Sigmoid colon (tissue), 7 donors: ENCODE measurements at regions of chr19 and their contacts with region 1.

Region 1: DNA sequence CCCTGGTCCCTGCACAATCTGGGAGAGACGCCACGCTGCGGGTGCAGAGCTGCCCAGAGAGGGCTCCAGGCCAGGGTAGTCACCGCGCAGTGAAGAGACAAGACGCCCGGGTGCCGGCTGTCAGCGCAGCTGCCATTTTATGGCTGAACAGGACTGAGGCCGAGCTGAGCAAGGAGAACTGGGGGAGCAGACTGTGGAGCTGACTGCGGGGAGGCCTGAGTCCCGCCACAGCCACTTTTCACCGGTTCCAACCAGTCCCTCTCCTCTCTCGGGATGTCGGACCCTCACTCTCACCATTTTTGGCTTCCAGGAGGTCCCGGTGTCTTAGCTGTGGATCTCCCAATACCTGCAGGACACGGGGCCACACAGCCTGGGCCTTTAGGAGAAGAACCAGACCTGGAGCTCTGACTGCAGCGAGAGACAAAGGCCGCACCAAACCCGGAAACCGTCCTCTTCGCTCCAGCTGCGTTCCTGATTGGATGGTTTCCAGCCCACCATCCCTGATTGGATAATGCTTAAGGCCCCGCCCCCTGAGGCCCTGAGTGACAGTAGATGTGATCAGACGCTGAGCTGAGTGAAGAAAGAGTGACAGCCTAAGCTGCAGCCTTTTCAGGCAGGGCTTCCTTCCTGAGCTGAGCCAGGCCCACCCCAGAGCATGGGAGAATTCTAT is at the start of gene ZNF626:
- DNase-seq: peak; percentile 98
- H3K4me3 ChIP-seq: peak within 1 kb of the TSS; percentile 66 to 79 (median 70)
- H3K27ac ChIP-seq: peak within 1 kb of the TSS; percentile 86 to 94 (median 89)
- H3K4me1 ChIP-seq: peaks cover 0 to 43% (median 36%) of the 10 kb centered on the region in 4 donors
- H3K27me3 ChIP-seq: no peaks in the 10 kb centered on the region
- CTCF ChIP-seq: no peak
- EP300 ChIP-seq: no peak
- POLR2A ChIP-seq: peak; percentile 65 to 74
- total RNA-seq, gene ZNF626: 14.3 to 20.1 (median 18.9) TPM

Region 2: GRCh38 chr19:20315543-20315942 is 345.7 kb before region 1 on chr19:
- intact Hi-C with region 1: no loop called
- DNase-seq: no peak
- H3K4me3 ChIP-seq: no peak overlapping the region
- H3K27ac ChIP-seq: no peak overlapping the region
- H3K4me1 ChIP-seq: no peaks in the 10 kb centered on the region
- H3K27me3 ChIP-seq: no peaks in the 10 kb centered on the region
- CTCF ChIP-seq: no peak
- EP300 ChIP-seq: no peak
- POLR2A ChIP-seq: no peak

Region 3: DNA sequence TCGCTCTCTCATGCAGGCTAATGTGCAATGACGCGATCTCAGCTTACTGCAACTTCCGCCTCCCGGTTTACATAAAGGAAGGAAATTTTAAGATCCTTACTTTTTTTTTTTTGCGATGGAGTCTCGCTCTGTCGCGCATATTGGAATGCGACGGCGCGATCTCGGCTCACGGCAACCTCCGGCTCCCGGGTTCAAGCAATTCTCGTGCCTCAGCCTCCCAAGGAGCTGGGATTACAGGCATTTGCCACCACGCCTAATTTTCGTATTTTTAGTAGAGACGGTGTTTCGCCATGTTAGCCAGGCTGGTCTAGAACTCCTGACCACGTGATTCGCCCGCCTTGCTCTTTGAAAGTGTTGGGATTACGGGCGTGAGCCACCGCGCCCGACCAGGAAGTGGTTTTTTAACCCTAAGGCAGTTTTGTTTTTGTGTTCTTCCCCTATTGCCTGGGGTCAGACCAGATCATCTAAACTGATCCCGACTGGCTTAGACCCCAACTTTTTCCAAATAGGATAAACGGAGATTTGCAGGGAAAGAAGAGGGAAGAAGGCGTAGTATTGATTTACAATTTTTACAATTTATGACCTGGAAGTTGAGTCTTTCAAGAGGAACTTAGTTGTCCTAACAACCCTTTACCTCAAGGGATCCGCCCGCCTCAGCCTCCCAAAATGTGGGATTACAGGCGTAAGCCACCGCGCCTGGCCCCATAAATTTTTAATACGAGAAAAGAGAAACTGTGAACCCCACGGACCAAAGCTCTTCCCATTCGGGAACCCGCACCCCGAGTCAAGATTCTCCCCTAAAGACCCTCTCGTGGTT is 237.7 kb before region 1 on chr19:
- intact Hi-C with region 1: loop called (anchors 5 kb)
- DNase-seq: peak; percentile 83
- H3K4me3 ChIP-seq: peak overlapping the region; percentile 57 to 69 (median 63)
- H3K27ac ChIP-seq: peak overlapping the region; percentile 84 to 90 (median 88)
- H3K4me1 ChIP-seq: peaks cover 0 to 13% (median 2%) of the 10 kb centered on the region in 4 donors
- H3K27me3 ChIP-seq: no peaks in the 10 kb centered on the region
- CTCF ChIP-seq: no peak
- EP300 ChIP-seq: no peak
- POLR2A ChIP-seq: no peak

Region 4: GRCh38 chr19:20565321-20566018 is 95.8 kb before region 1 on chr19 and contains the start of gene ZNF737:
- intact Hi-C with region 1: loop called (anchors 2 kb)
- DNase-seq: peak; percentile 98
- H3K4me3 ChIP-seq: peak within 1 kb of the TSS; percentile 55 to 83 (median 64)
- H3K27ac ChIP-seq: peak within 1 kb of the TSS; percentile 82 to 95 (median 88)
- H3K4me1 ChIP-seq: peaks cover 0 to 26% (median 14%) of the 10 kb centered on the region in 4 donors
- H3K27me3 ChIP-seq: no peaks in the 10 kb centered on the region
- CTCF ChIP-seq: peak in 3 of 4 experiments; percentile 18 to 42 (median 41)
- EP300 ChIP-seq: no peak
- POLR2A ChIP-seq: peak; percentile 50 to 73
- total RNA-seq, gene ZNF737: 9.5 to 17.7 (median 11.2) TPM

Region 5: DNA sequence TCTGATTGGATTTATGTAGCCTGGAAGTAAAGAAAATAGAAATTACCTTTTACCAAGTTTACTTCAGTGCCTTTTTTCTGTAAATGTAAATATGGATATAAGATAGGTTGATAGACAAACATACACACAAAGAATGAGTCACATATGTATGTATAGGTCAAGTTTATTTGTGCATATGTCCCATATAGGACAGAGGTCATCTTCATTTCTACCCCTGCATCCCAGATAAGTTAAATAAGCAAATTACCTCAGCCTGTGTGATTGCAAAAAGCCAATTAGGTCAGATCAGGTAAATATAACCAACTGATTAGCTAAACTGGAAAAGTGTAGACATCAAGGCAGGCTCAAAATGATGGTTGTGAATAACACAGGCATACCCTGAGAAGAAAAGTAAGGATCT is 65.5 kb after region 1 on chr19:
- intact Hi-C with region 1: no loop called
- DNase-seq: no peak
- H3K4me3 ChIP-seq: no peak overlapping the region
- H3K27ac ChIP-seq: no peak overlapping the region
- H3K4me1 ChIP-seq: no peaks in the 10 kb centered on the region
- H3K27me3 ChIP-seq: no peaks in the 10 kb centered on the region
- CTCF ChIP-seq: no peak
- EP300 ChIP-seq: no peak
- POLR2A ChIP-seq: no peak

Region 6: GRCh38 chr19:20776083-20777076 is 115.1 kb after region 1 on chr19 and contains the start of gene ZNF66:
- intact Hi-C with region 1: loop called (anchors 5 kb)
- DNase-seq: peak; percentile 98
- H3K4me3 ChIP-seq: peak within 1 kb of the TSS; percentile 64 to 77 (median 67)
- H3K27ac ChIP-seq: peak within 1 kb of the TSS; percentile 52 to 76 (median 63)
- H3K4me1 ChIP-seq: peaks cover 0 to 9% (median 4%) of the 10 kb centered on the region in 4 donors
- H3K27me3 ChIP-seq: no peaks in the 10 kb centered on the region
- CTCF ChIP-seq: no peak
- EP300 ChIP-seq: no peak
- POLR2A ChIP-seq: peak; percentile 32 to 48
- total RNA-seq, gene ZNF66: 1.7 to 3.9 (median 3.6) TPM

Region 7: GRCh38 chr19:20923077-20923871 is 262.0 kb after region 1 on chr19 and contains the start of gene ZNF85:
- intact Hi-C with region 1: loop called (anchors 10 kb)
- DNase-seq: peak; percentile 94
- H3K4me3 ChIP-seq: peak within 1 kb of the TSS; percentile 38 to 69 (median 62)
- H3K27ac ChIP-seq: peak within 1 kb of the TSS; percentile 81 to 92 (median 87)
- H3K4me1 ChIP-seq: peaks cover 0 to 7% (median 2%) of the 10 kb centered on the region in 4 donors
- H3K27me3 ChIP-seq: no peaks in the 10 kb centered on the region
- CTCF ChIP-seq: no peak
- EP300 ChIP-seq: no peak
- POLR2A ChIP-seq: no peak
- total RNA-seq, gene ZNF85: 3.6 to 6.1 (median 4.1) TPM